Left cardiac atrium (tissue), 4 donors: ENCODE measurements at regions of chr11 and their contacts with region 1.

Region 1: GRCh38 chr11:13669544-13670488 is 1.3 kb downstream of the FAR1 start:
- DNase-seq: no peak
- ATAC-seq: no peak

Region 2: GRCh38 chr11:13503393-13503792 is 166.4 kb before region 1 on chr11:
- intact Hi-C with region 1: no loop called
- DNase-seq: no peak
- ATAC-seq: no peak

Region 3: DNA sequence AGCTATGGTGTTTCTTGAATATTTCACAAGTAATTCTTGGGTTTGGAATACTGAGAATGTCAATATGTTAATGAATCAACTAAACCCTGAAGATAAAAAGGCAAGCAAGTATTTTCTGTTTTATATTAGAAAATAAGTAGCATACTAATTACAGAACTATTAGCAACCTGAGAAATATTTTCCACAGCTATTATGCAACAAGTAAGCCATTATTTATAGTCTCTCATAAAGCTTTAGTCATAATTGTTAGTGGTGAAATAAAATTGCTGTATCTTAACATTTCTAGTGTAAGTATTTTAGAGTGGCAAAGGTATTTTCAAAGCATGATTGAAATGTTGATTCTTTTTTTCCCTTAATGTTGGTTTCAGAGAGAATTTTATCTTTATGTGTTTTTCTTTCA is 51.9 kb after region 1 on chr11:
- intact Hi-C with region 1: loop called in 1 of 2 experiments (anchors 10 kb)
- DNase-seq: no peak
- ATAC-seq: peak in 1 of 2 donors; percentile 53

Region 4: DNA sequence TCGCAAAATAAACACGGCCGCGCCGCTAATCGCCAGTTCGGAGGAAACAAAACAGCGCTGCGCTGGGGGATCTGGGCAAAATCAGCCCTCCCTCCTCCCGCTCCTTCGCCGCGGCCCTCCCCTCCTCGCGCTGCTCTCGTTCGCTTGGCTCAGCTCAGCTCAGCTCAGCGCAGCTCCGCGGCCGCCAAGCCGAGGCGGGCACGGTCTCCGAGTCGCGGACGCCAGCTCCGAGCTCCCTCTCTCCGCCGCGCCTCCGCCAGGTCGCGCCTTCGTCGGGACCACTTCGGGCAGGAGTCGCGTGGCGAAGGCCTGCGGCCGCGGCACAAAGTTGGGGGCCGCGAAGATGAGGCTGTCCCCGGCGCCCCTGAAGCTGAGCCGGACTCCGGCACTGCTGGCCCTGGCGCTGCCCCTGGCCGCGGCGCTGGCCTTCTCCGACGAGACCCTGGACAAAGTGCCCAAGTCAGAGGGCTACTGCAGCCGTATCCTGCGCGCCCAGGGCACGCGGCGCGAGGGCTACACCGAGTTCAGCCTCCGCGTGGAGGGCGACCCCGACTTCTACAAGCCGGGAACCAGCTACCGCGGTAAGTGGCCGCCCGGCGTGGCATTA is 292.8 kb after region 1 on chr11 and contains the start of gene SPON1:
- intact Hi-C with region 1: no loop called
- DNase-seq: peak; percentile 51
- ATAC-seq: peak; percentile 83 to 86
- total RNA-seq, gene SPON1: 21.1 to 23.4 TPM